ENCODE measurements at regions of chr3 and their contacts with region 1.

Region 1: GRCh38 chr3:50192689-50193141 is 1.3 kb downstream of the GNAT1 start:
- DNase-seq: no peak
- H3K4me3 ChIP-seq: no peak overlapping the region
- H3K27ac ChIP-seq: no peak overlapping the region
- H3K4me1 ChIP-seq: peaks cover 25% of the 10 kb centered on the region
- H3K27me3 ChIP-seq: peaks cover 8% of the 10 kb centered on the region
- CTCF ChIP-seq: peak; percentile 88 to 93 (median 88)
- POLR2A ChIP-seq: no peak

Region 2: DNA sequence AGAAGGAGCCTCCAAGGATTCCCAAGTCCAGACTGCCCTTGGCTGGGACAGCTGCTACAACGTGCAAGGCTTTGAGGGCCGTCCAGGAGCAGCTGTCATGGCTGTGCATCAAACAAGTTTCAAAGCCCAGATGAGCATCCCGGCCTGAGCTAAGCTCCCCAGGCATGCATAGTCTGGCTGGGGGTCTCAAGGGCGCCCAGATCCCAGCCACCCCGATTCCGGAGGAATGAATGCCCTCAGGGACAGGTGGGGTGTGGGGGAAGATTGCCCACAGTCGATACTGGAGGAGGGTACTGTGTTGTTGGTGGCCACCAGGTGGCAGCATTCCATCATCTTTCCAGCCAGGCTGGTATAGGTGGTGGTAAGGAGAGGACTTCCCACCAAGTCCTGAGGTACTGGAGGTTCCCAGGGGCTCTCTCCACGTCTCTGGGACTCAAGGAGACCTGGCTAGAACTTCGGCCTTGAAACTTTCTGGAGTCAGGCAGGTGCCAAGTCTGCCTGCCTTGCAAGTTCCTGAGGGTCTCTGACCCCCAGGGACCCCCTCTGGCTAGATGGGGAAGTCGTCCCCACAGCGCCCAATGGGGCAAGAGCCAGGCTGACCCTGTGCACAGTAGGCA is 71.2 kb before region 1 on chr3:
- intact Hi-C with region 1: loop called (anchors 2 kb)
- DNase-seq: no peak
- H3K4me3 ChIP-seq: no peak overlapping the region
- H3K27ac ChIP-seq: no peak overlapping the region
- H3K4me1 ChIP-seq: peaks cover 43% of the 10 kb centered on the region
- H3K27me3 ChIP-seq: no peaks in the 10 kb centered on the region
- CTCF ChIP-seq: peak; percentile 70 to 89 (median 81)
- POLR2A ChIP-seq: no peak

Region 3: DNA sequence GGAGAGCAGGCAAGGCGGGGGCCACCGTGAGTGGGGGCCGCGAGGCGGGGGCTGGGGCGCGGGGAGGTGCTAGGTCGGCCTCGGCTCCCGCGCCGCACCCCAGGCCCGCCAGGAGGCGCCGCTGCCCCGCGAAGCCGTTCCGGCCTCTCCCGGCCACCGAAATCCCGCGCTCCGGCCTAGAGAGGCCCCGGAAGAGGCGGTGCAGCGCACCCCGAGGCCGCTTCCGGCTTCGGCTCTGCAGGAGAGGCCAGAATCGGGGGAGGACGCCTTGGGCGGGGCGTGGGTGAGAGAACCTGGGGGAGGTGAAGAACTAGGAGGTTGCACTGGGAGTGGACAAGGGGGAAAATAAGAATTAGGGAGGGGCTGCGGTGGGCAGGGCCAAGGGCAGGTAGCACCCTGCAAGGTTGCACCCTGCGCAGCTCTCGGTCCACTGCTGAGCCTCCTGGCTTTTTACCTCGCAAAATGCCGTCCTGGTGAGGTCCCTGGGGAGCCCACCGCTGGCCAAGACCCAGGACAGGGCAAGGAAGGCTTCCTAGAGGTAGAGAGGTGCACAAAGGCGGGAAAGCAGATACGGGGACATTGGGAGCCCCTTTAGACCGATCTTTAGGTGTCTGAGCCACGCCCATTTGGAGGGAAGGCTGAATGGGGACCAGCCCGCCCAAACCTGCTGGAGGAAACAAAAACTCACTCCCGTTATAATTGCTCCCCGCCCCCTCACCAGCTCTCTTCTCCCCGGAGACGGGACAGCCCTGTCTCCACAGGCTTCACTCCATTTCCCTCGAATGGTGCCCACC is 34.9 kb after region 1 on chr3:
- intact Hi-C with region 1: loop called (anchors 2 kb)
- DNase-seq: peak in 1 of 2 donors; percentile 93
- H3K4me3 ChIP-seq: peak overlapping the region; percentile 72 to 90
- H3K27ac ChIP-seq: peak overlapping the region; percentile 91
- H3K4me1 ChIP-seq: peaks cover 25% of the 10 kb centered on the region
- H3K27me3 ChIP-seq: no peaks in the 10 kb centered on the region
- CTCF ChIP-seq: peak; percentile 72 to 93 (median 72)
- POLR2A ChIP-seq: no peak

Region 4: DNA sequence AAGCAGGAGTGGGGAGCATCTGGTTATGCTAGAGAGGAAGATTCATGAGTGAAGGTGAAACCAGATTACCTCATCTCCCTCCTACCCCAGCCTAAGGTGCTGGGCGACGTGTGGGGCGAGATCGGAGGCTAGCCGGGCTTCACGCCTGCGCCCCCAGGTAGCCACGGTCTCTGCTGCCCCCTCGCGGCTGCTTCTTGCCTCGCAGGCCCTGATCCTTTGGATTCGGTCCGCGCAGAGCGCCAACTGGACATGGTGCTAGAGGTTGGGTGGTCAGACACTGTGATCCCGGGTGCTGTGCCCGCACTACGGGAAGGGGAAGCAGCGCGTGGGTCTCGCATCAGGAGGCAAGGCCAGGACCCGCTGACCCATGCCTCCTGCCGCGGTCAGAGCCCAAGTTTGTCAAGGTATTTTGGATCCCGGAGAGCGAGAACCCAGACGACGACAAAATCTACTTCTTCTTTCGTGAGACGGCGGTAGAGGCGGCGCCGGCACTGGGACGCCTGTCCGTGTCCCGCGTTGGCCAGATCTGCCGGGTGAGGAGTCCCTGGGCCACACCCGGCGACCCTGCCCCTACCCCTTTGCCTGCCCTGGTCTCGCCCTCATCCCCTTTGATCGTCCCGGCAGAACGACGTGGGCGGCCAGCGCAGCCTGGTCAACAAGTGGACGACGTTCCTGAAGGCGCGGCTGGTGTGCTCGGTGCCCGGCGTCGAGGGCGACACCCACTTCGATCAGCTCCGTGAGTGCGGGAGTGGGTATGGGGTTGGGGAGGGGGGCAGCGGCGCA is 80.4 kb after region 1 on chr3:
- intact Hi-C with region 1: loop called (anchors 2 kb)
- DNase-seq: no peak
- H3K4me3 ChIP-seq: peak overlapping the region; percentile 23 to 28
- H3K27ac ChIP-seq: peak overlapping the region; percentile 37
- H3K4me1 ChIP-seq: peaks cover 66% of the 10 kb centered on the region
- H3K27me3 ChIP-seq: no peaks in the 10 kb centered on the region
- CTCF ChIP-seq: peak; percentile 91 to 100 (median 99)
- POLR2A ChIP-seq: no peak

Measured in vagina (tissue), 2 donors.